ENCODE measurements at regions of chr14 and their contacts with region 1.

Region 1: GRCh38 chr14:23588884-23589598 is 10.5 kb upstream of the JPH4 start:
- DNase-seq: peak; percentile 87
- ATAC-seq: peak; percentile 95
- H3K4me3 ChIP-seq: no peak overlapping the region
- H3K27ac ChIP-seq: no peak overlapping the region
- H3K4me1 ChIP-seq: no peaks in the 10 kb centered on the region
- H3K27me3 ChIP-seq: no peaks in the 10 kb centered on the region; the same call in 1 of the 2 replicates
- CTCF ChIP-seq: peak; percentile 85

Region 2: DNA sequence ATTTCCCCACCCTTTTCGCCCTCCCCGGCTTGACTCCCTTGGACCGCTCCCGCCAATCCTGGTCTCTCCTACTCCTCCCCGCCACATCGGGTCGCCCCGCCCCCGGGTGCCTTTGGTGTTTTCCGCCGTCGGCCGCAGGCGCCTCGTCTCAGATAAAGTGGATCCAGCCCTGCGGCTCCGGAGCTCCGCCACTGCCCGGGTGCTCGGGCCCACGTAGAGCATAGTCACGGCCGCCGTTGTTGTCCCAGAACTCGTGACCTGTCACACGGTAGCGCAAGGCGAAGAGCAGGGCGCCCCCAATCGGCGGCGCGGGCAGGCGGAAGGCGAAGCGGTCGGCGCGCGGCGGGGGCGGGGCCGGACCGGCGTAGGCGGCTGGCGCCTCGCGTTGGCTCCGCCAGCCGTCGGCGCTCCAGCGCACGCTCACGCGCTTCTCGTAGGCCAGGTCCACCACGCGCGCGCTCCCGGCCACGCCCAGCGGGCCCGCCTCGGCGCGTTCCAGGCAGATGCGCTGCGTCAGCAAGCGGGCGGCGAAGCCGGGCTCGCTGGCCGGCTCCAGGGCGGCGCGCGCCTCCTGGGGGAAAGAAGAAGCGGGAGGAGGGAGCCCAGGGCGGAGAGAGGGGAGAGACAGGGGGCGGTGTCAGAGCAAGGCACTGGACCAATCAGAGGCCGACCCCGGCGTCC is 287.6 kb before region 1 on chr14:
- CTCF ChIA-PET with region 1: no interaction called
- POLR2A ChIA-PET with region 1: no interaction called
- intact Hi-C with region 1: no loop called
- DNase-seq: peak; percentile 99
- ATAC-seq: peak; percentile 75
- H3K4me3 ChIP-seq: peak overlapping the region; percentile 79
- H3K27ac ChIP-seq: peak overlapping the region; percentile 63
- H3K4me1 ChIP-seq: peaks cover 20% of the 10 kb centered on the region
- H3K27me3 ChIP-seq: no peaks in the 10 kb centered on the region
- CTCF ChIP-seq: peak; percentile 78

Region 3: DNA sequence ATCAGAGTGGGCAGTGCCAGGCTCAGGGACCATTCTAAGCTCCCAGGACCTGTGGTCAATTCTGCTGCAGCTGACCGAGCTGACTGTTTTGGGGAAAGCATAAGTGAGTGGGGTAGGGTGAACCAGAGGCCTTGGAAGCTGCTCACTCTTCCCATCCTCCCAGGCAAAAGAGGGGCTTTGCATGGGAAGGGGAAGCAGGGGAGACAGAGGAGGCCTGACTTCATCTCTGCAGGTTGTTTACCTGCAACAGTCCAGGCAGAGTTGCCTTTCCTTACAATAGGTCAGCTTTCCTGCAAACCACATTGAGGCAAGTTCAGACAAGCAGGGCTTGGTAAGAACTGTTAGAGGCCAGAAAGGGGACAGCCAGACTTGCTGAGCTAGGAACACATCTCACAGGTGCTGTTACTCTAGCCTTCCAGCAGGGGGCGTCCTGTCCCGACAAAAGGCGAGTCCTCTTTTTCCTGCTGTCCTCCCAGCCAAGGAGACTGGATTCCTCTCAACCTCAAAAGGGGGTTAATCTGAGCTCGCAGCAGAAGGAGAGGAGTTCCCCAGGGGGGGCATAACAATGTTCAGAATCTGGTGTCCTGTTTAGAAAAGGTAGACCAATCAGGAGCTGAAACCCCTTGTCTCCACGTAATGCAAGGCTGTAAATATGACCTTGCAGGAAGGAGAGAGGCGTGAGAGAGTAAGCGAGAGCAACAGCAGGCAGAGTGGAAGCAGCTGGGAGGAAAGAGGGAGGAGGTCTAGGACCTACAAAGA is 42.8 kb after region 1 on chr14:
- CTCF ChIA-PET with region 1: interaction called, 11 read pairs
- POLR2A ChIA-PET with region 1: no interaction called
- intact Hi-C with region 1: no loop called
- DNase-seq: peak; percentile 71
- ATAC-seq: peak; percentile 75
- H3K4me3 ChIP-seq: no peak overlapping the region
- H3K27ac ChIP-seq: no peak overlapping the region
- H3K4me1 ChIP-seq: no peaks in the 10 kb centered on the region
- H3K27me3 ChIP-seq: no peaks in the 10 kb centered on the region
- CTCF ChIP-seq: peak; percentile 96

Region 4: DNA sequence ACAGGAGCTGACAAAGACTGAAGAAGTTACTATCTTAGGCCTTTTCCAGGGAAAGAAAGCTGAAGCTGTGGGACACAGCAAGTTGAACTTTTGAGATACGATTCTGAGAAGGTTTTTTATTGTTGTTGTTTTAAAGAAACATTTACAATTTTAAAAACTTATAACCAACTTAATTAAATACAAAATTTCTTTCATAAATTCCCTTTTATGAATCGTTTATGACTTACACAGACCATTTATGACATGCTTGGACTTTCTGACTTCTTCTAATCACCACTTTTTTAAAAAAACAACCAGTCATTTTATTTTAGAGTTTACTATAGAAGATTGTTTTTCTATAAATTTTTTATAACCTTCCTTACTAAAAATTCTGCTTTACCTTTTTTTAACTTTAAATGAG is 115.8 kb after region 1 on chr14:
- CTCF ChIA-PET with region 1: no interaction called
- POLR2A ChIA-PET with region 1: no interaction called
- intact Hi-C with region 1: no loop called
- DNase-seq: peak; percentile 25
- ATAC-seq: no peak
- H3K4me3 ChIP-seq: no peak overlapping the region
- H3K27ac ChIP-seq: no peak overlapping the region
- H3K4me1 ChIP-seq: no peaks in the 10 kb centered on the region
- H3K27me3 ChIP-seq: 0 out of 2 replicates have a peak, but pooled peaks cover 3% of the 10 kb centered on the region
- CTCF ChIP-seq: no peak

Region 5: DNA sequence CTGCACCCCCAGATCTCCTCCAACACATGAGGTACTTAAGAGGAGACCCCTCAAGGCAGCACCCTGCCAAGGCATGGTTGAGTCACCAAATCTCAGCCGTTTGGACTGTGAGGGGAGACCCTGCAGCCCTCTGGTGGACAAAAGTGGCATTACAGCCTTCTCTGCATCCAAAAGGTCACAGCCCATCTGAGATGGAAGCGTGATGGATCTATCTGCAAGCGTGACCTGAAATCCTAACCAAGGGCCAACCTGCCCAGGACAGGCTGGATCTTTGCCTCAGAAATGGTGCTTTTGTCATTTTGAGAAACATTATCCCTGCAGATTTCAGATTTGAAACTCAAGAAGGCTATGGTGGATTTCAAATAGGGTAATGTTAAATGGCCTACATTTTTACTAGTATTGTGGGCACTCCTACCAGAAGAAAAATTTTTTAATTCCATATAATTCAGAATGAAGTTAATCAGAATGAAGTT is 340.8 kb after region 1 on chr14:
- CTCF ChIA-PET with region 1: no interaction called
- POLR2A ChIA-PET with region 1: no interaction called
- intact Hi-C with region 1: loop called (anchors 5 kb)
- DNase-seq: peak; percentile 86
- ATAC-seq: peak; percentile 85
- H3K4me3 ChIP-seq: no peak overlapping the region
- H3K27ac ChIP-seq: no peak overlapping the region
- H3K4me1 ChIP-seq: no peaks in the 10 kb centered on the region
- H3K27me3 ChIP-seq: no peaks in the 10 kb centered on the region
- CTCF ChIP-seq: peak; percentile 96